HCT116 (cell line): ENCODE measurements at regions of chr13 and their contacts with region 1.

Region 1: DNA sequence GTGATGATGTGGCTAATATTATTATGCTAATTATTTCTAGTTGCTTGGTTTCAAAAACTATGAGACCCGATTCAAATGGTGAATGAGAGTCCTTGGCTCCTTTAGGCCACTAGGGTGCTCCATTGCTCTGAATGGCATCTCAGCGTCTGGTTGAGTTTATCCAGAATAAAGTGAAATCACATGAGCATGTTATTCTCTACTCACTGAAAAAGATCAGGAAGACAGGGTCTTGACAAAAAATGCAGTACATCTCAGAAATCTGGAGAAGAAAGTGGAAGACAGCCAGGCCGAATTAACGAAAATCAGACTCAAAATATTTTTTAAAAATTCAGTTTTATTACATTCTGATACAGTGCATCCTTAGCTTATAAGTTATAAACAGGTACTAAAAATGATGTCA is 516.2 kb downstream of the MYO16 start:
- DNase-seq: peak; percentile 58
- ATAC-seq: peak; percentile 84
- H3K4me3 ChIP-seq: no peak overlapping the region
- H3K27ac ChIP-seq: no peak overlapping the region
- H3K4me1 ChIP-seq: peaks cover 3 to 41% of the 10 kb centered on the region in 2 experiments; a peak in 3 of 4 replicates
- H3K27me3 ChIP-seq: no peaks in the 10 kb centered on the region
- CTCF ChIP-seq: peak; percentile 68 to 93 (median 86); a peak in 5 of 6 replicates
- POLR2A ChIP-seq: no peak
- RAD21 ChIP-seq: peak; percentile 92

Region 2: GRCh38 chr13:109156181-109156935 is 10.7 kb after region 1 on chr13:
- CTCF ChIA-PET with region 1: interaction called, 12 read pairs
- POLR2A ChIA-PET with region 1: interaction called, 3 read pairs
- RAD21 ChIA-PET with region 1: no interaction called
- intact Hi-C with region 1: no loop called
- DNase-seq: no peak
- ATAC-seq: peak; percentile 66
- H3K4me3 ChIP-seq: peak overlapping the region; percentile 25 to 49
- H3K27ac ChIP-seq: peak overlapping the region; percentile 56
- H3K4me1 ChIP-seq: peaks cover 42 to 89% of the 10 kb centered on the region in 2 experiments
- H3K27me3 ChIP-seq: no peaks in the 10 kb centered on the region
- CTCF ChIP-seq: no peak
- POLR2A ChIP-seq: no peak
- RAD21 ChIP-seq: no peak

Region 3: DNA sequence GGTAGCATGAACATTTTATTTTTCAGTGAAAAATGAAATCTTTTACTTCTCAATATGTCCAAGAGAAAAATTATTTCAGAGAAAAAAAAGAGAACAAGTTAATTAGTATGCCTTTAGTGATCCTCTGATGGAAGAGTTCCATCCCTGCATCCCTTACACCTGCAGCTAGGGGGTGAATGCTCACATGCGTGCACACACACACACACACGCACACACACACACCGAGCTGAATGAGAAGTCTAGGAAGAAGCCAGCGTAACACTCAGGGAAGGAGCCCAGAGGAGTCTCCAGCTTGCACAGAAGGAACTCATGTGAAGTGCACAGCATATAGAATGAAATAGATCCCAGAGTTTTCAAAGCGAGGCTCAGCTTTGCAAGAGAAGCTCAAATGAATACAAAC is 130.2 kb after region 1 on chr13:
- CTCF ChIA-PET with region 1: no interaction called
- POLR2A ChIA-PET with region 1: interaction called, 3 read pairs
- RAD21 ChIA-PET with region 1: no interaction called
- intact Hi-C with region 1: loop called (anchors 5 kb)
- DNase-seq: no peak
- ATAC-seq: peak; percentile 28
- H3K4me3 ChIP-seq: no peak overlapping the region
- H3K27ac ChIP-seq: no peak overlapping the region
- H3K4me1 ChIP-seq: peaks cover 38 to 48% of the 10 kb centered on the region in 2 experiments
- H3K27me3 ChIP-seq: no peaks in the 10 kb centered on the region
- CTCF ChIP-seq: peak; percentile 4 to 77 (median 66); a peak in 4 of 6 replicates
- POLR2A ChIP-seq: no peak
- RAD21 ChIP-seq: peak; percentile 28; the same call in 1 of the 2 replicates

Region 4: DNA sequence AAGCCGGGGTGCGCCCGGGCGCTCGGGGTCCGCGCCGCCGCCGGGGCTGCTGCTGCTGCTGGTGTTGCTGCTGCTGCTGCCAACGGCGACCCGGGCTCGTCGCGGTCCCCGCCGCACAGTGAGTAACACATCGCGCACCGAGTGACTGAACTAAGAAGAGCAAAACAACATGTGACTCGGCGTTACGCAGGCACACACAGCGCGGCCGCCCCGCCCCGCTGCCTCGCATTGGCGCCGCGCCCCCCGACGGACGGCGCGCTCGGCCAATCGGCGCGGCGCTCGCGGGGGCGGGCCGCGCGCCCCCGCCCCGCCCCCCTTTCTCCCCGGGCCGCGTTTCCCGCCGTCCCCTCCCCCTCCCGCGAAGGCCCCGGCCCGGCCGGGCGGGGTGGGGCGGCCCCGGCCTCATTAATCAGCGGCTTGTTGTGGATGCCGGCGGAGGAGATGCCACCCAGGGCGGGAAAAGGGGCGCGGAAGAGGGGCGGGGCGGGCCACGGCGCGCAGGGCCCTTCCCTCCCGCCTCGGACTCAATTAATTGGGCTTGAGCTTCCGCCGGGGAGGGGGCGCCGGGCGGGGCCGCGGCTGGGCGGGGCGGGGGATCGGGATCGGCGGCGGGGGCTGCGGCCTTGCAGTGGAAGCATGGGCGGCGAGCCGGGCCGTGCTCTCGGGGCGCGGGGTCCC is 641.0 kb after region 1 on chr13 and contains the start of gene IRS2:
- CTCF ChIA-PET with region 1: no interaction called
- POLR2A ChIA-PET with region 1: no interaction called
- RAD21 ChIA-PET with region 1: no interaction called
- intact Hi-C with region 1: loop called (anchors 2 kb)
- DNase-seq: peak; percentile 81
- ATAC-seq: peak; percentile 80
- H3K4me3 ChIP-seq: peak within 1 kb of the TSS; percentile 55 to 70
- H3K27ac ChIP-seq: peak within 1 kb of the TSS; percentile 73
- H3K4me1 ChIP-seq: peaks cover 0 to 21% of the 10 kb centered on the region in 2 experiments; a peak in 3 of 4 replicates
- H3K27me3 ChIP-seq: no peaks in the 10 kb centered on the region
- CTCF ChIP-seq: no peak
- POLR2A ChIP-seq: peak; percentile 56
- RAD21 ChIP-seq: no peak
- total RNA-seq, gene IRS2: 9.2 TPM